K562 (cell line): ENCODE measurements at regions of chr14 and their contacts with region 1.

Region 1: DNA sequence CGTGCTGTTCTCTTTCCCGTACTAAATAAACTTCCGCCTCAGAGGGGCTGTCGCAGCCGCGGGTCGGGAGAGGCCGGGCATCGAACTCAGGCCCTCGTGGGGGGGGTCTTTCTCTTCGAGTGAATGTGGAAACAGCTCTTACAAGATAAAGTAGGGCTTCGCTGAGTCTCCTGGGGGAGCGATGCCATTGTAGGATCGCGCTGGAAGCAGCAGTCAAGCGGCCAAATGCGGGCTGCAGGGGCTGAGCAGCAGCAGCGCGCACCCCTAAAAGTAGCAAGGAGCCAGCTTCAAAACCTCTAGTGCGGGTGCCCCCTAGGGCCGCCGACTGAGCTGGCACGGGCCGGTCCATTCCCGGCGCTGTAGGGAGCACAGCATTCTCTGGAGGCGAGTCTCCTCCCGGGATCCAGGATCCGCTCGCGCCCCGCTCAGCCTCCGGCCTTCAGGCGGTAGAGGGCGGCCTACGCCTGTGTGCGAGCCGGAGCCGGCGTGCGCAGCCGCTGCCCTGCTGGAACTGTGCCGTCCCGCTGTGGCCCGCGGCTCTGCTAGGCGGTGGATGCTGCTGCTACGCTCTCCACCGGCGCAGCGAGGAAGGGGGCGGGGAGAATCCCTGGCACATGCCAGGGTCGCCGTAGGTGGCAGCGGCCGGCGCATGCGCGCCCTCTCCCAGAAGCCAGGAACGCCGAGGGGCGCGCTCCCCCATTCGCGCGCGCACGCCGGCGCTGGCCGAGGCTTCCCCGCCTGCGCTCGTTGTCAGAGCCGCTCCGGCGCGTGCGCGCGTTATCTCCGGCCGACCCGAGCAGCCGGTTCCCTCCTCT is at the start of gene FUT8:
- DNase-seq: peak; percentile 35 to 67 (median 44)
- ATAC-seq: peak; percentile 90
- H3K4me3 ChIP-seq: peak within 1 kb of the TSS; percentile 57
- H3K27ac ChIP-seq: peak within 1 kb of the TSS; percentile 49; the same call in 2 of the 3 replicates
- H3K4me1 ChIP-seq: peaks cover 0 to 17% of the 10 kb centered on the region in 2 experiments; a peak in 1 of 5 replicates
- H3K27me3 ChIP-seq: no peaks in the 10 kb centered on the region
- CTCF ChIP-seq: peak; percentile 45 to 71 (median 46); a peak in 5 of 6 replicates
- EP300 ChIP-seq: no peak
- POLR2A ChIP-seq: no peak
- RAD21 ChIP-seq: peak; percentile 59 to 61
- polyA plus RNA-seq, gene FUT8: 4.1 to 6.0 TPM

Region 2: DNA sequence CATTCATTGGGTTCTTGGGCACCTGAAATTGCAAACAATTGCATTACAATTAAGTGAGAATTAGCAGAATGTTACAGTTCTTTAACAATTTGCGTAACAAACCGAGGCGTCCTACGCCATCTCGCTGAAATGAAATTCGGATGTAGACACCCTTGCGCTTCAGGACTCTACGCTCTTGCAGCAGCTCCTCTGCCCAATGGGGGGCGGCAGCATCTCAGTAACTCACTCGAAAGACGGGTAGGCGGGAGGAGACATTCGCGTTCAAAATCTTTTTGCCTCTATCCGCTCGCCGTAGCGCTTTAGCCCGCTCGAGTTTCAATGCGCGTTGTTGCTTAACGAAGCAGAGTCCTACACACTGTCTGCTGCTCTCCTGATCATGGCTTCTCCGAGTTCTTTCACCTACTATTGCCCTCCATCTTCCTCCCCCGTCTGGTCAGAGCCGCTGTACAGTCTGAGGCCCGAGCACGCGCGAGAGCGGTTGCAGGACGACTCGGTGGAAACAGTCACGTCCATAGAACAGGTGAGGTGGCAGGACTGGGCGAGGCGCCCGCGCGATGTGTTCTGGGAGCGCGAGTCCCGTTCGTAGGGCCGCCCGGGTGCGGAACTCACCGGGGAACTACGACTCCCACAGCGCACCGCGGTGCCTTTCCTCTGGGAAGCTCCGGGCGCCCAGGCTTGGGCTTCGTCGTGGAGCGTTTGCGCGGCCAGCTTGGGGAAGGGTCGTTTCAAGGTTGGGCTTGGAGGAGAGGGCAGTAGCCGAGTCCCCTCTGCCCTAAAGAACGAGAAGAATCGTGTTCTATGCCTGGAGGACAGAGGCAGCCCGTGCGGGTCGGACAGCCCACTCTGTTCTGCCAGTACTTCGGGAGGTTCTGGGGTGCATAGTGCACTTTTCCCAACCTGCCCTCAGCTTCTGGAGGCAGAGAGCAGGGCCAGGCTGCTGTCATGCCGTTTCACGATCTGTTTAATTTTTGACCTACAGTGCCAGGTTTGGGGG is 425.4 kb before region 1 on chr14 and contains the start of gene FNTB:
- CTCF ChIA-PET with region 1: no interaction called
- POLR2A ChIA-PET with region 1: no interaction called
- in situ Hi-C with region 1: no loop called
- intact Hi-C with region 1: loop called (anchors 2 kb)
- DNase-seq: peak; percentile 86 to 93 (median 88)
- ATAC-seq: peak; percentile 99
- H3K4me3 ChIP-seq: peak within 1 kb of the TSS; percentile 67
- H3K27ac ChIP-seq: peak within 1 kb of the TSS; percentile 83
- H3K4me1 ChIP-seq: peaks cover 0 to 4% of the 10 kb centered on the region in 2 experiments; a peak in 3 of 5 replicates
- H3K27me3 ChIP-seq: no peaks in the 10 kb centered on the region; a peak in 1 of 5 replicates
- CTCF ChIP-seq: peak; percentile 82 to 94 (median 93)
- EP300 ChIP-seq: 0 out of 2 replicates have a peak, but pooled peaks have one; percentile 34
- POLR2A ChIP-seq: peak; percentile 84
- RAD21 ChIP-seq: peak; percentile 84 to 94
- polyA plus RNA-seq, gene FNTB: 14.1 to 23.2 TPM

Region 3: DNA sequence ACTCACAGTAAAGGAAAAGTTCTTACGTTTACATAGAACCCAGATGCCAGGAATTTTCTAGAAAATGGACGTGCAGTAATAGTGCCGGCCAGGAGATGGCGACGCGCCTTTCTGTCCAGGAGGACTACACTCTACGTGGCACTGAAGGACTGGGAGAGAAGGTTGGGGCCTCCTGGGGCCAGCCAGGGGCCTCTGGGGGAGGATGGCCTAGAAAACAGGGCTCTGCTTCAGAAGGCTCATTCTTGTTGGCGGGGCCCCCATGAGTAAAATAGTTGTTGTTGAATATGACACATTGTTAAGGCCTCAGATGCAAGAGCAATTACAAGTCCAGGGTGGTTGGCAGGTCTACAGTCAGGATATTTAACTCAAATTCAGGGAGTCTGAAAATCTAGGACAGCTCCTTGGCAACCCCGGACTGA is 189.8 kb before region 1 on chr14:
- CTCF ChIA-PET with region 1: no interaction called
- POLR2A ChIA-PET with region 1: no interaction called
- in situ Hi-C with region 1: no loop called
- intact Hi-C with region 1: loop called (anchors 10 kb)
- DNase-seq: peak; percentile 52 to 65 (median 57)
- ATAC-seq: peak; percentile 93
- H3K4me3 ChIP-seq: no peak overlapping the region
- H3K27ac ChIP-seq: no peak overlapping the region
- H3K4me1 ChIP-seq: no peaks in the 10 kb centered on the region
- H3K27me3 ChIP-seq: no peaks in the 10 kb centered on the region
- CTCF ChIP-seq: peak; percentile 72 to 80 (median 80)
- EP300 ChIP-seq: no peak
- POLR2A ChIP-seq: no peak
- RAD21 ChIP-seq: peak; percentile 74 to 86

Region 4: DNA sequence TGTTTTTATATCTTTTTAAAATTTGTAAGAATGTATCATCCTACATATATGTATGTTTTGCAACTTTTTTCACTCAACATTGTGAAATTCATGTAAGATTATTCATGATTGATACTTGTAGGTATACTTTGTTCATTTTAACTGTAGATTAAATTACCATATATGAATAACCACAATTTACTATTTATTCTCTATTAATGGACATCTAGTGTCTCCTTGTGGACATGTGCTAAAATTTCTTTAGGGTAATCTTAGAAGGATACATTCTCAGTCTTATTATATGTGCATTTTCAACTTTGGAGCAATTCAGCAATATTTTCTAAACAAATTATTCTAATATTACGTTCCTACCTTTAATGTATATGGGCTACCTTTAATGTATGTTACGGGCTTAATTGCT is 192.7 kb after region 1 on chr14:
- CTCF ChIA-PET with region 1: interaction called, 8 read pairs
- POLR2A ChIA-PET with region 1: no interaction called
- in situ Hi-C with region 1: no loop called
- intact Hi-C with region 1: loop called (anchors 5 kb)
- DNase-seq: no peak
- ATAC-seq: no peak
- H3K4me3 ChIP-seq: no peak overlapping the region
- H3K27ac ChIP-seq: no peak overlapping the region
- H3K4me1 ChIP-seq: no peaks in the 10 kb centered on the region
- H3K27me3 ChIP-seq: no peaks in the 10 kb centered on the region
- CTCF ChIP-seq: peak in 1 of 3 experiments; percentile 52; a peak in 2 of 6 replicates
- EP300 ChIP-seq: no peak
- POLR2A ChIP-seq: no peak
- RAD21 ChIP-seq: peak; percentile 51 to 62

Region 5: GRCh38 chr14:65832431-65833266 is 420.4 kb after region 1 on chr14:
- CTCF ChIA-PET with region 1: no interaction called
- POLR2A ChIA-PET with region 1: interaction called, 4 read pairs
- in situ Hi-C with region 1: loop called (anchors 25 kb)
- intact Hi-C with region 1: no loop called
- DNase-seq: no peak
- ATAC-seq: peak; percentile 37; the same call in 1 of the 3 replicates
- H3K4me3 ChIP-seq: no peak overlapping the region
- H3K27ac ChIP-seq: no peak overlapping the region
- H3K4me1 ChIP-seq: no peaks in the 10 kb centered on the region
- H3K27me3 ChIP-seq: peaks cover 3 to 28% of the 10 kb centered on the region in 2 experiments; a peak in 3 of 5 replicates
- CTCF ChIP-seq: peak; percentile 11 to 22 (median 20); a peak in 2 of 6 replicates
- EP300 ChIP-seq: no peak
- POLR2A ChIP-seq: no peak
- RAD21 ChIP-seq: peak in 1 of 2 experiments; percentile 15; a peak in 2 of 4 replicates

Region 6: GRCh38 chr14:66070509-66071319 is 658.5 kb after region 1 on chr14:
- CTCF ChIA-PET with region 1: no interaction called
- POLR2A ChIA-PET with region 1: interaction called, 3 read pairs
- in situ Hi-C with region 1: loop called (anchors 25 kb)
- intact Hi-C with region 1: loop called (anchors 10 kb)
- DNase-seq: peak; percentile 47 to 76 (median 70)
- ATAC-seq: peak; percentile 88
- H3K4me3 ChIP-seq: no peak overlapping the region
- H3K27ac ChIP-seq: no peak overlapping the region
- H3K4me1 ChIP-seq: no peaks in the 10 kb centered on the region
- H3K27me3 ChIP-seq: no peaks in the 10 kb centered on the region
- CTCF ChIP-seq: peak; percentile 60 to 78 (median 68)
- EP300 ChIP-seq: no peak
- POLR2A ChIP-seq: no peak
- RAD21 ChIP-seq: peak; percentile 48 to 68; a peak in 3 of 4 replicates